MCF 10A (cell line): ENCODE measurements at regions of chr5 and their contacts with region 1.

Region 1: GRCh38 chr5:180605554-180606214 is 14.4 kb upstream of the SCGB3A1 start:
- DNase-seq: peak; percentile 85
- H3K4me3 Mint-ChIP-seq: no peak overlapping the region
- H3K27ac Mint-ChIP-seq: no peak overlapping the region
- H3K4me1 Mint-ChIP-seq: peaks cover 17% of the 10 kb centered on the region
- H3K27me3 Mint-ChIP-seq: peaks cover 16% of the 10 kb centered on the region
- CTCF ChIP-seq: peak; percentile 95

Region 2: DNA sequence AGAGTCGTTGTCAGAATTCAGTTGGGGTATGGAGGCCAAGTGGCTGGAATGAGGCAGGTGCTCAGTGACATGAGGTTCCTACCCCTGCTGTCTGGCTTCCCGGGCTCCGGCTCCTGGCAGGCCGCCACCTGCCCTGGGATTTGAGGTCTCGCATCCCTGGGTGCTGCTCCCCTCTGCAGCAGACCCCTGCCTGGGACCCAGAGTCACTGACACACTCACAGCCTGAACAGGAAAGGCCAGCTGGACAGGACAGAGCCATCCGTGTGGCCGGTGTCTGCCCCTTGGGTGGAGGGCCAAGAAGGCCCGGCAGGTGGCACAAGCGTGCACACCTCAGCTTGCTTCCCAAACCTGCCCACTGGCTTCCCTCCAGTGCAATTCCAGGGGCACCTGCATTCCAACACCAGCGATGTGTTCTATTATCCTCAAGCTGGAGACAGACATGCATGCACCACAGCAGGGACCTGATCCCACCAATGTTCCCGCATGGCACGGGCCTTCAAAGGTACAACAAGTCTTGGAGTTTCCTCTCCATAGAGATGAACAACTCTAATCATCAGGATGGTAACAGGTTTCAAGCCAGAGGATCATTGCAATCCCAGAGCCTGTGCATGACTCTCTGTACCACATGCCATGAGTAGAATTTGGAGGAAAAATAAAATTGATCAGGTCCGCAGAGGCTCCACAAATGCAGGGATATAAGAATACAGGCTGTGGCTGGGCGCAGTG is 488.5 kb before region 1 on chr5:
- CTCF ChIA-PET with region 1: interaction called, 10 read pairs
- POLR2A ChIA-PET with region 1: interaction called, 3 read pairs
- intact Hi-C with region 1: no loop called
- DNase-seq: peak; percentile 52
- H3K4me3 Mint-ChIP-seq: no peak overlapping the region
- H3K27ac Mint-ChIP-seq: no peak overlapping the region
- H3K4me1 Mint-ChIP-seq: no peaks in the 10 kb centered on the region
- H3K27me3 Mint-ChIP-seq: no peaks in the 10 kb centered on the region
- CTCF ChIP-seq: peak; percentile 63

Region 3: DNA sequence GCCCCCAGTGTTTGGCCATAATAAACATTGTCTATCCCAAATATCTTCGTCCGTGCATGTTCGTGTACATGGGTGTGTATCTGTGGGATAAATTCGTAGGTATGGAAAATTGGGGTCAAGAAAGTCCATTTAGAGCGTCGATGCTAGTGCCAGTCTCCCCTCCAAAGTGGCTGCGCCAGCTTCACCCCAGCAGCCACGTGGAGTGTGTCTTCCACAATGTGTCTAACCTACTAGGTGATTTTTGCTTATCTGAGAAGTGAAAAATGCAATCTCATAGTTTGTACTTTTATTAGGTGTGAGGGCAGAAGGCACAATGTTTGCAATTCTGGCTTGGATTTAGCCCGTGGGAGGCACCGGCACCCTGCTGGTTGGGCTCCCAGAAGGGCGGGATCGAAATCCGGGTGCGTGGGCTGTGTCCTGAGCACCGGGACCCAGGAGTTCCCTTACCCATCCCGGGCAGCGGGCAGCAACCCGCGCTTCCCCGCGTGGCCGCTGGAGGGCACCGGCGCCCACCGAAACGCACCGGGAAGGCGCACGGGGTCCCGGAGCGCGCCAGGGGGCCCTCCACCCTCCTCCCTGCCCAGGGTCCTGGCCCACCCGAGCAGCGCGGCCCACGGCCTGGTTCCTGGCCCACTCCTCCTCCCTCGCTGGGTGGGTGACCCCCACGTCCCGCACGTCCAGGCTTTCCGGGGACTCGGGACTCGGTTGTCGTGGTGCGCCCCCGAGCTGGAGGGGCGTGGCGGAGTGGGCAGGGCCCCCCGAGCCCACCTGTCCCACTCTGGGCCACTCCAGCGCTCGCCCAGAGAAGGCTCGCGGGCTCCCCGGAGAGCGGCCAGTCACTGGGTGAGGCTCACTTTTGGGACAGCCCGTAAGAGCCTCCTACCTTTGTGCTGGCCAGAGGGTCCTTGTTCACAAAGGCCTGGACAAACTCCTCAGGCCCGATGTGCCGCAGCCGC is 478.7 kb before region 1 on chr5:
- CTCF ChIA-PET with region 1: interaction called, 5 read pairs
- POLR2A ChIA-PET with region 1: no interaction called
- intact Hi-C with region 1: loop called (anchors 5 kb)
- DNase-seq: peak; percentile 58
- H3K4me3 Mint-ChIP-seq: no peak overlapping the region
- H3K27ac Mint-ChIP-seq: no peak overlapping the region
- H3K4me1 Mint-ChIP-seq: peaks cover 17% of the 10 kb centered on the region
- H3K27me3 Mint-ChIP-seq: peaks cover 32% of the 10 kb centered on the region
- CTCF ChIP-seq: peak; percentile 99

Region 4: DNA sequence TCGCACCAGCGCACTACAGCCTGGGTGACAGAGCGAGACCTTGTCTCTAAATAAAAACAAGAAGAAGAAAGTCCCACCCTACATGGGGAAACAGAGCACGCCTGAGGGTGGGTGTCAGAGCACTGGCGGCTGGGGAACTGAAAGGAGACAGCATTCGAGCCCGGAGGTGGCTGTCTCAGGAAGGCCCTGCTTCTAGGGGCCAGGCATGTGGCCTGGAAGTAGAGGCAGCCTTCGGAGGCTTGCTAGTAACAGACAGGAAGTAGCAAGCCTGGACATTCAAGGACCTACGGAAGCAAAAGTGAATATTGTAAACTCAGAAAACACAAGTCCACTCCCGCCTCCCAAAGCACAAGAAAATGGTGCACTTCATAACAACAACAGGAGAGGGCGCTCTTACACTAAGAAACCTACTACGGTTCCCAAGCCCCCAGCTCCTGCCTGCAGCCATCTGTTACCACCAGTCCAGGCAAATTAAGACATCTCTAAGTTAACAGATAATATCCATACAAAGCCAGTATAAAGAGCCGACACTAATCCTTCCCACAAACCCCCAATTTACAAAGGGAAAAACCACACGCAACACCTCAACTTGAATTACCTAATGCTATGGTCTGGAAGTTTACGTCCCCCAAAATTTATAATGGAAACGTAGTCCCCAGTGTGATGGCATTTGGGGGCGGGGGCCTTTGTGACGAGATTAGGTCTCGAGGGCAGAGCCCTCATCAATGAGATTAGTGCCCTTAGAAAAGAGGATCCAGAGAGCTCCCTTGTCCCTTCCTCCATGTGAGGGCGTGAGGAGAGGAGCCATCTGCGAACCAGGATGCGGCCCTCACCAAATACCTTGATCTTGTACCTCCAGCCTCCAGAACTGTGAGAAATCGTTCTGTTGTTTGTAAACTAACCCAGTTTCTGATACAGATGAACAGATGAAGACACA is 404.4 kb before region 1 on chr5:
- CTCF ChIA-PET with region 1: interaction called, 4 read pairs
- POLR2A ChIA-PET with region 1: no interaction called
- intact Hi-C with region 1: loop called (anchors 5 kb)
- DNase-seq: peak; percentile 65
- H3K4me3 Mint-ChIP-seq: no peak overlapping the region
- H3K27ac Mint-ChIP-seq: no peak overlapping the region
- H3K4me1 Mint-ChIP-seq: no peaks in the 10 kb centered on the region
- H3K27me3 Mint-ChIP-seq: no peaks in the 10 kb centered on the region
- CTCF ChIP-seq: peak; percentile 66

Region 5: DNA sequence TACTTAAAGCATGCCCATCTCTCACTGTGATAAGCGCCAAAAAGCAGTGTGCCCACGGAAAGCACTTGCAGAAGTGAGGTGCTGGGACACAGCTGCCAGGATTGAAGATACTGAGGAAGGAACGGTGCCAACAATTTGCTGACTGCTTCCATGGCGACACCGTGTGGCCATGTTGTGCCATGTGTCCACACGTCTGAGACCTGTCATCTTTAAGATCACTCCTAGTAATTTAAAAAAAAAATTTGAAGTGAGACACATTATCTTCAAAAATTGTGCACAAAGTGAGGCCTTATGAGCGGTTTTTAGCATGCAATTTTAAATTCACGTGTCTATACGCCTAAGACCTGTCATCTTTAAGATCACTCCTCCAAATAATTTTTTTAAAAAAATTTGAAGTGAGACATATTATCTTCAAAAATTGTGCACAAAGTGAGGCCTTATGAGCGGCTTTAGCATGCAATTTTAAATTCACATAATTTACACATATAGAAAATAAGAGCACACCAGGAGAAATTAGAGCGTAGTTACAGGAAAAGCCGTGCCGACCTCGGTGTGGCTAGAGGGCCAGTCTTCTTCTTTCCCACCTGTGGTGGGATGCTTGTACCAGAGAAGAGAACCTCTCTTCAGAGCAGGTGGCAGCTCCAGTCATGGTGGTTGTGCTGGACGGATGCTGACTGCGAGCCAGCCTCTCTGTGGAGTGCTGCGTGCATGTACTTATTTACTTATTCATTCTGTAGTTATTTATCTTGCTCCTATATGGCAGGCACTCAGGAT is 65.1 kb after region 1 on chr5:
- CTCF ChIA-PET with region 1: interaction called, 4 read pairs
- POLR2A ChIA-PET with region 1: no interaction called
- intact Hi-C with region 1: loop called (anchors 2 kb)
- DNase-seq: peak; percentile 75
- H3K4me3 Mint-ChIP-seq: no peak overlapping the region
- H3K27ac Mint-ChIP-seq: no peak overlapping the region
- H3K4me1 Mint-ChIP-seq: peaks cover 8% of the 10 kb centered on the region
- H3K27me3 Mint-ChIP-seq: peaks cover 13% of the 10 kb centered on the region
- CTCF ChIP-seq: peak; percentile 81

Region 6: DNA sequence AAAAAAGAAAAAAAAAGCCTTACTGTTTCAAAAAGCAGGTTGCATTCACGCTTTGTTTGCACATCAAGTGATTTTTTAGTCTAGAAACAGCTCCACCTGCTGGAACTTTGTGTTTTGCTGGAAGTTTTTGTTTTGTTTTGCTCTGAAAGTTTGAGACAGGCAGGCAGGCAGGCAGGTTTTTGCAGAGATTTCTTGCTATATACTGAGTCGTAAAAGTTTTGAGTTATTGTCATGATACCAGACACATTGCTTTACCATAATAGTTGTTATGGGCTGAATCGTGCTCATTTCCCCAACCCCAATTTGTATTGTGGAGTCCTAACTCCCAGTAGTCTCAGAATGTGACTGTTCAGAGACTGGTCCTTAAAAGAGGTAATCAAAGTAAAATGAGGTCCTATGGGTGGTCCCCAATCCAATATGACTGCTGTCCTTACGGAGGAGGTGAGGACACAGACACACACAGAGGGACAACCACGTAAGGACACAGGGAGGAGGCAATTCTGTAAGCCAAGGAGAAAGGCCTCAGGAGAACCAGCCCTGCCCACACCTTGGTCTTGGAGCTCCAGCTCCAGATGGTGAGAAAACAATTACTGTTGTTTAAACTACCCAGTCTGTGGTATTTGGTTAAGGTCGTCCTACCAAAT is 113.2 kb after region 1 on chr5:
- CTCF ChIA-PET with region 1: interaction called, 3 read pairs
- POLR2A ChIA-PET with region 1: interaction called, 3 read pairs
- intact Hi-C with region 1: loop called (anchors 5 kb)
- DNase-seq: peak; percentile 62
- H3K4me3 Mint-ChIP-seq: no peak overlapping the region
- H3K27ac Mint-ChIP-seq: no peak overlapping the region
- H3K4me1 Mint-ChIP-seq: no peaks in the 10 kb centered on the region
- H3K27me3 Mint-ChIP-seq: peaks cover 62% of the 10 kb centered on the region
- CTCF ChIP-seq: peak; percentile 81